ENCODE measurements at regions of chr21 and their contacts with region 1.

Region 1: DNA sequence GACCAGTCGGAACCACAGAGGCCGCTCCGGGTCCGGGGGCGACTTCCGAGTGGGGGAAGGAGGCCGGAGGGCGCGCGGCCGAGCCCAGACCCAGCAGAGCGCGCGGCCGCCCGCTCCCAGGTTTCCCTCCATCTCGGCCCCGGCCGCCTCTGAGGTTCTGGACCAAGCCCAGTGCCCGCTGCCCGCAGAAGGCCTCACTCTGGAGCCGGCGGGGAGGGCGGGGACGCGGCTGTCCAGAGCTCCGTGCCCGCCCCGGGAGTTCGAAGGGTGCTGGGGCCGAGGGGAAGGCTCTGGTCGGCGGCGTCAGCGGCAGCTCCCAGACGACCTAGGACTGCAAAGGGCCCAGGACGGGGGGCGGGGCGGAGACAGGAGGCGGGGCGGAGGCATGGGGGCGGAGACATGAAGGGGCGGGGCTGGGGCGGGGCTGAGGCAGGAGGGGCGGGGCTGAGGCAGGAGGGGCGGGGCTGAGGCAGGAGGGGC is 48.0 kb upstream of the SLC19A1 start:
- DNase-seq: peak; percentile 65 to 86 (median 72)
- ATAC-seq: peak; percentile 57
- H3K4me3 ChIP-seq: peak overlapping the region; percentile 56
- H3K4me3 Mint-ChIP-seq: peak overlapping the region; percentile 58
- H3K27ac ChIP-seq: no peak overlapping the region
- H3K27ac Mint-ChIP-seq: no peak overlapping the region
- H3K4me1 ChIP-seq: peaks cover 36% of the 10 kb centered on the region
- H3K4me1 Mint-ChIP-seq: peaks cover 10% of the 10 kb centered on the region
- H3K27me3 ChIP-seq: peaks cover 0 to 7% of the 10 kb centered on the region in 2 experiments
- H3K27me3 Mint-ChIP-seq: peaks cover 10% of the 10 kb centered on the region
- CTCF ChIP-seq: no peak

Region 2: GRCh38 chr21:45542242-45542666 is 48.0 kb before region 1 on chr21 and contains the start of gene SLC19A1:
- CTCF ChIA-PET with region 1: no interaction called
- POLR2A ChIA-PET with region 1: no interaction called
- intact Hi-C with region 1: loop called in 1 of 2 experiments (anchors 1 kb)
- DNase-seq: peak; percentile 48 to 90 (median 68)
- ATAC-seq: peak; percentile 83
- H3K4me3 ChIP-seq: peak within 1 kb of the TSS; percentile 46
- H3K4me3 Mint-ChIP-seq: peak within 1 kb of the TSS; percentile 86
- H3K27ac ChIP-seq: peak within 1 kb of the TSS in 1 of 2 donors; percentile 55
- H3K27ac Mint-ChIP-seq: peak within 1 kb of the TSS; percentile 80
- H3K4me1 ChIP-seq: peaks cover 23% of the 10 kb centered on the region
- H3K4me1 Mint-ChIP-seq: peaks cover 24% of the 10 kb centered on the region
- H3K27me3 ChIP-seq: no peaks in the 10 kb centered on the region
- H3K27me3 Mint-ChIP-seq: no peaks in the 10 kb centered on the region
- CTCF ChIP-seq: no peak
- total RNA-seq, gene SLC19A1: 11.5 to 12.0 TPM

Region 3: DNA sequence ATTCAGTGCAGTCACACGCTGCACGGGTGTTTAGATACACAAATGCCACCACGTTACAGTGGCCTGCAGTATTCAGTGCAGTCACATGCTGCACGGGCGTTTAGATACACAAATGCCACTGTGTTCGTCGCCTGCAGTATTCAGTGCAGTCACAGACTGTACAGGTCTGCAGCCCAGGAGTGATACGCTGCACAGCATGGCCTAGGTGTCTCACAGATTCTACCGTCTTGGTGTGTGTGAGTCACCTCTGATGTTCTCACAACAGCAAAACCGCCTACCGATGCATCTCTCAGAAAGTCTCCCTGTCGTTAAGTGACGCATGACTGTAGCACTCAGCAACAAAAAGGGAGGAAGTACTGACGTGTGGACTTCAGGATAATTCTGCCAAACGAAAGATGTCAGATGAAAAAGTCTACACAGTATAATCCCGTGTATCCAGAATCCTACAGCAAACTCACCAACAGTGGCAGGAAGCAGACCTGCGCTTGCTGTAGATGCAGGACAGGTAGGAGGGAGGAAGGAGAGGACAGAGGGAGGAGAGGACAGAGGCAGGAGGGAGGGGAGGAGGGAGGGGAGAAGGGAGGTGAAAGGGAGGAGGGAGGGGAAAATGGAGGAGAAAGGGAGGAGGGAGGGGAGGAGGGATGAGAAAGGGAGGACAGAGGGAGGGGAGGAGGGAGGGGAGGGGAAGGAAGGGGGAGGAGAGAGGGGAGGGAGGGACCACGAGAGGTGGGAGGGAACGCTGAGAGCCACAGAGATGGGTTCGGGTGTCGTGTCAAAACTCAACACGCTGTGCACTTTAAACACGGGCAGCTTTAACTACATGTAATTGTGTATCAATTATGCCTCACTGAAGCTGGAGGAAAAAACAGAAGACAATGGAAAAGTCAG is 17.0 kb after region 1 on chr21:
- CTCF ChIA-PET with region 1: no interaction called
- POLR2A ChIA-PET with region 1: no interaction called
- intact Hi-C with region 1: loop called in 1 of 2 experiments (anchors 2 kb)
- DNase-seq: peak in 13 of 14 experiments; percentile 32 to 87 (median 52)
- ATAC-seq: peak; percentile 86
- H3K4me3 ChIP-seq: no peak overlapping the region
- H3K4me3 Mint-ChIP-seq: peak overlapping the region; percentile 52
- H3K27ac ChIP-seq: peak overlapping the region in 1 of 2 donors; percentile 50
- H3K27ac Mint-ChIP-seq: peak overlapping the region; percentile 82
- H3K4me1 ChIP-seq: peaks cover 27% of the 10 kb centered on the region
- H3K4me1 Mint-ChIP-seq: peaks cover 19% of the 10 kb centered on the region
- H3K27me3 ChIP-seq: no peaks in the 10 kb centered on the region
- H3K27me3 Mint-ChIP-seq: no peaks in the 10 kb centered on the region
- CTCF ChIP-seq: no peak

Region 4: GRCh38 chr21:45615145-45615711 is 24.9 kb after region 1 on chr21:
- CTCF ChIA-PET with region 1: no interaction called
- POLR2A ChIA-PET with region 1: no interaction called
- intact Hi-C with region 1: loop called in 1 of 2 experiments (anchors 1 kb)
- DNase-seq: peak; percentile 74 to 98 (median 88)
- ATAC-seq: peak; percentile 89
- H3K4me3 ChIP-seq: peak overlapping the region; percentile 56
- H3K4me3 Mint-ChIP-seq: peak overlapping the region; percentile 87
- H3K27ac ChIP-seq: peak overlapping the region; percentile 71 to 93
- H3K27ac Mint-ChIP-seq: peak overlapping the region; percentile 91
- H3K4me1 ChIP-seq: peaks cover 46% of the 10 kb centered on the region
- H3K4me1 Mint-ChIP-seq: peaks cover 42% of the 10 kb centered on the region
- H3K27me3 ChIP-seq: no peaks in the 10 kb centered on the region
- H3K27me3 Mint-ChIP-seq: no peaks in the 10 kb centered on the region
- CTCF ChIP-seq: no peak